ENCODE measurements at regions of chr3 and their contacts with region 1.

Region 1: DNA sequence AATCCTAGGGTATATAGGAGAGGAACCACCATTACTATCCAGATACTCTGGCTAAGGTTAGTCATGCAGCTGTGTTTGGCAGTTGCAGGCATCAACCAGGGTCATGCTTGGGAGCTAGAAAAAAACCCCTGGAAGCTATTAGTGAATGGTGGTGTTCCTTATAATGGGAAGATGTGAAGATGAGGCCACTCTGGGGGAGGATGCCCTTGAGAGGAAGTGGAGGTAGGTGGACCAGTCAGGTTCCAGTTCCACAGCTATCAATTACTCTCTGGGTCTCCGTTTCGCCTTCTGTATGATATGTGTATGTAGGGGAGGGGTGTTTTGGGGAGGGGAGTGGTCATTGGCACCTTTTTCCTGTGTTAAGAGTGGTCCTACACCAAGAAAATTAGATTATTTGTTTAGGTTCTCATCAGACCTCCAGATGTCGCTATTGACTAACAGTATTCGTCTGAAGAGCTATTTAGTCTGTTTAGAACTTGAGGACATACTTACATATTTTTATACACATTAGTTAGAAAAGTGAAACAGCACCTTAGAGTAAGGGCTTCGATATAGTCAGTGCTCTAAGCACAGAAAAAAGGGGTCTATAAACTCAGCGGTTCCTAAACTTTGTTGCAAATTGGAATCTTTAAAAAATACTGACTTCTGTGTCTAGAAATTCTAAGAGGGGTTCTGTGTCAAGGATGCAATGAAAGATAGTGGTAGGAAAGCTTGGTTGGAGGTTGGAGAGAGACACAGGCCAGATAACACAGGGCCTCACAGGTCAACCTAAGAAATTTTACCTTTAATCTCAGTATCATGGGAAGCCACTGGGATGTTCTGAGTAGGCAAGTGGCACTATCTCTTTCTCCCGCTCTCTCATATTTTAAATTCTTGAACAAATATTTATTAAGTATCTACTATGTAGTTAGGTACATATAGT is 9.1 kb upstream of the HPS3 start:
- DNase-seq: peak; percentile 63
- ATAC-seq: peak; percentile 95
- H3K4me3 ChIP-seq: no peak overlapping the region
- H3K27ac ChIP-seq: no peak overlapping the region
- H3K4me1 ChIP-seq: 0 out of 4 replicates have a peak, but pooled peaks cover 0 to 3% of the 10 kb centered on the region in 2 experiments
- H3K27me3 ChIP-seq: no peaks in the 10 kb centered on the region
- CTCF ChIP-seq: peak; percentile 49 to 94 (median 71)
- POLR2A ChIP-seq: no peak
- RAD21 ChIP-seq: peak; percentile 92

Region 2: DNA sequence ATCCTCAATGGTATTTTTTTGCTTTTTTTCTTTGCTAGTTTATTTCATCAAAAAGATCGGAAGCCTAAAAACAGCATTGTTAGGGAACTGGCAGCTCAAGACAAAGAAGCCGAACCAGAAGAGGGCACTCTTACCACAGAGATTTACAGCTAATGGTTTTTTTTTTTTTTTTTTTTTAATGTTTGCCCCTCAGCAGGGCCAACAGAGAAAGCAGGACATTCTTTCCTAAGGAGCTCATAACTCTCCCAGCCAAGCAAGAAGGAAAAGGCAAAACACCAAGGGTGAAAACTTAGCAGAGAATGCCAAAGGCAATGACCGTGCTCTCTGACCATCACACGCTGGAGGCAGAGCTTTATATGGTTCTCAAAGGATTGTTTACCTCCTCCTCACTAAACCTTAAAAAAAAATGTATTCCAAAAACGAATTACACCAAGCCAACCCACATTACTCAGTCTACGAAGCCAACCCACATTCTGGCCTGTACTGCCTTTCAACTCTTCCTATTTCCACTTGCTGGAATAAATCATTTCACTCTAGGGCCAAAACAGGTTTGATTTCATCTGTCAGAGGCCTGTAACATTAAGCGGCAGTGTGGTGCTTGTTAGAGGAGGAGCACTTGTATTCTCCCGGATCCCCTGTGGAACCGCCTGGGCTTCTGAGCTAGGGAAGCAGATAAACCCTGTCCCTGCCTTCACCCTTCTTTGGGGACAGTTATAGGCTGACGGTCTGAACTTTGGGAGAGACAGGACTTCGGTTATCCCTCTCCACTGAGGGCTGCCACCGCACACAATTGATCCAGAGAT is 164.6 kb before region 1 on chr3:
- CTCF ChIA-PET with region 1: interaction called, 26 read pairs
- POLR2A ChIA-PET with region 1: no interaction called
- RAD21 ChIA-PET with region 1: interaction called, 4 to 7 read pairs
- intact Hi-C with region 1: loop called (anchors 2 kb)
- DNase-seq: peak; percentile 48
- ATAC-seq: peak; percentile 69
- H3K4me3 ChIP-seq: no peak overlapping the region; a peak in 1 of 4 replicates
- H3K27ac ChIP-seq: no peak overlapping the region
- H3K4me1 ChIP-seq: peaks cover 0 to 5% of the 10 kb centered on the region in 2 experiments; a peak in 1 of 4 replicates
- H3K27me3 ChIP-seq: no peaks in the 10 kb centered on the region
- CTCF ChIP-seq: peak; percentile 44 to 89 (median 75)
- POLR2A ChIP-seq: no peak
- RAD21 ChIP-seq: peak; percentile 87

Region 3: GRCh38 chr3:148962513-148962912 is 157.8 kb before region 1 on chr3:
- CTCF ChIA-PET with region 1: no interaction called
- POLR2A ChIA-PET with region 1: no interaction called
- RAD21 ChIA-PET with region 1: no interaction called
- intact Hi-C with region 1: loop called (anchors 2 kb)
- DNase-seq: peak; percentile 56
- ATAC-seq: peak; percentile 82
- H3K4me3 ChIP-seq: no peak overlapping the region
- H3K27ac ChIP-seq: no peak overlapping the region
- H3K4me1 ChIP-seq: peaks cover 0 to 7% of the 10 kb centered on the region in 2 experiments; a peak in 2 of 4 replicates
- H3K27me3 ChIP-seq: no peaks in the 10 kb centered on the region
- CTCF ChIP-seq: peak; percentile 20 to 57 (median 39); a peak in 4 of 6 replicates
- POLR2A ChIP-seq: no peak
- RAD21 ChIP-seq: peak; percentile 72

Region 4: DNA sequence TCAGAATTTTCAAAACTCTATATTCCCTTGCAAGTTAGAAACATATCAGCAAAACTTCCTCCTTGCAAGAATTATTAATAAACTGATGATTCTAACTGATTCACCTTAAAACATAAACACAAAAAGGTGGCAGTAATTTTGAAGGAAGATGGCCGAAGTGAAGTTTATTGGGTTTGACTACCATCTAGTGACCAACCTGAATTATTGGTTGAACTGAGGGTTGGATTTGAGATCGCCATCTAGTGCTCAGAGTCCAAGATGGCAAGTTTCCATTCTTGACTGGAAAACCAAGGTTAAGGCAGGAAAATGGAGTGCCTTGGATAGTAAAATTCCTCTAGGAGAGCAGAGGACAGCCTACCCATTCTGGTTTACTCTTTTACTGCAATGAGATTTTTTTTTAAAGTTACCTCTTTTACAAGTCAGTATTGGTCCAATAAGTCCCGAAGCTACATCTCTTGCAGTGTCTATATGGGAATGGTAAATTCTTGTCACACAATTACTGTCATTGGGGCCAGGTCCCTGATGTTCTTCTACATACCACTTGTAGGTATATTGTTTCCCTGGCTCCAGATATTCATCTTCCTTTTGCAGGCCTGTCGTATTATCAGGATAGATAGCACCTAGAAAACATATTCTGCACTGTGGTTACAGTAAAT is 152.9 kb after region 1 on chr3:
- CTCF ChIA-PET with region 1: interaction called, 16 read pairs
- POLR2A ChIA-PET with region 1: no interaction called
- RAD21 ChIA-PET with region 1: interaction called, 3 to 6 read pairs
- intact Hi-C with region 1: loop called (anchors 1 kb)
- DNase-seq: peak; percentile 86
- ATAC-seq: peak; percentile 95
- H3K4me3 ChIP-seq: no peak overlapping the region
- H3K27ac ChIP-seq: no peak overlapping the region
- H3K4me1 ChIP-seq: no peaks in the 10 kb centered on the region
- H3K27me3 ChIP-seq: no peaks in the 10 kb centered on the region
- CTCF ChIP-seq: peak; percentile 90 to 100 (median 98)
- POLR2A ChIP-seq: no peak
- RAD21 ChIP-seq: peak; percentile 99

Region 5: DNA sequence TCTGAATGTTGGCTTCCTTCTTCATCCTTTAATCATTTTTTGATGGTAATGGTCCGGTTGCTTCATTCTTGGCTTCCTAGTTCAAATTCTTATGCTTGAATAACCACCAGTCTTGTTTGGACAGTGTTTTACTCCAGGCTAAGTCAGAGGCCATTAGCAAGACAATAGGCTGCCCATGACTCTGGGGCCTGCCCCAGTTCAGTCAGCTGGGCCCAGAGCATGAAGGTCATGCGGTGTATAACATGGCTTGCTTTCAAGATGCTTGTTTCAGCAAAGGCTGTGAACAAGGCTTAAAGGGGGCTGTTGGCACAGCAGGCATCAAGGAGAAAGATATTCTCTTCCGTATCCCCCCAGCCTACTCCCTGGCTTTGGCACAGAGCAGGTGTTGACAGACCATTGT is 199.4 kb after region 1 on chr3:
- CTCF ChIA-PET with region 1: no interaction called
- POLR2A ChIA-PET with region 1: no interaction called
- RAD21 ChIA-PET with region 1: no interaction called
- intact Hi-C with region 1: no loop called
- DNase-seq: no peak
- ATAC-seq: no peak
- H3K4me3 ChIP-seq: no peak overlapping the region
- H3K27ac ChIP-seq: no peak overlapping the region
- H3K4me1 ChIP-seq: peaks cover 0 to 24% of the 10 kb centered on the region in 2 experiments; a peak in 2 of 4 replicates
- H3K27me3 ChIP-seq: no peaks in the 10 kb centered on the region
- CTCF ChIP-seq: no peak
- POLR2A ChIP-seq: no peak
- RAD21 ChIP-seq: no peak

Region 6: GRCh38 chr3:149330609-149331331 is 210.5 kb after region 1 on chr3:
- CTCF ChIA-PET with region 1: interaction called, 5 read pairs
- POLR2A ChIA-PET with region 1: no interaction called
- RAD21 ChIA-PET with region 1: interaction called, 4 to 5 read pairs
- intact Hi-C with region 1: loop called (anchors 1 kb)
- DNase-seq: no peak
- ATAC-seq: no peak
- H3K4me3 ChIP-seq: no peak overlapping the region
- H3K27ac ChIP-seq: no peak overlapping the region
- H3K4me1 ChIP-seq: peaks cover 0 to 39% of the 10 kb centered on the region in 2 experiments; a peak in 2 of 4 replicates
- H3K27me3 ChIP-seq: no peaks in the 10 kb centered on the region
- CTCF ChIP-seq: no peak
- POLR2A ChIP-seq: no peak
- RAD21 ChIP-seq: no peak

Region 7: DNA sequence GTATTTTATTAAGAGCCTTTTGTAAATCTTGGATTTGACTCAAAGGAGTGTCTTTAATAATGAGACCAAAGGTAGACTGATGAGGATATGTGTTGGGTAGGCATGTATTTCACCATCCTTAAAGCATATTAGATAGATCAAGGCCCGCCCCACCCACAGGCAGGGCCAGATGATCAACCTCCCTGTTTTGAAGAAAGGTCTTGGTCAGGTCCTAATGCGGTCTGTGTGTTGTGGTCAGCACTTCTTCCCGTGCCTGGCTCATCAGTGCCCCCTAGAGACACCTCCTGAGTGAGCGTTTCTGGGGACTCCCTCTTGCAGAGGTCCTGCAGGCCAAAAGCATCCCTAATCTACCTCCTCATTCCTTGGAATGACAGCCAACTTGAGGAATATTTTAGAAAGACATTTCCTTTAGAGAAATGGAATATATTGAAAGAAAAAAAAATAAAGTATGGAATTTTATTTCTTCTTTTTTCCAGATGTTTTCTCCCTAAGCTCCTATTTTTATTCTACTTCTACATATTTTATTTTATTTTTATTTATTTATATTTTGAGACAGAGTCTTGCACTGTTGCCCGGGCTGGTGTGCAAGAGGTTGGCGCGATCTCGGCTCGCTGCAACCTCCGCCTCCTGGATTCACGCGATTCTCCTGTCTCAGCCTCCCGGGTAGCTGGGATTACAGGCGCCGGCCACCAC is 360.2 kb after region 1 on chr3:
- CTCF ChIA-PET with region 1: no interaction called
- POLR2A ChIA-PET with region 1: no interaction called
- RAD21 ChIA-PET with region 1: interaction called in 1 of 2 experiments, 3 read pairs
- intact Hi-C with region 1: loop called (anchors 1 kb)
- DNase-seq: peak; percentile 76
- ATAC-seq: peak; percentile 100
- H3K4me3 ChIP-seq: no peak overlapping the region
- H3K27ac ChIP-seq: no peak overlapping the region
- H3K4me1 ChIP-seq: peaks cover 0 to 6% of the 10 kb centered on the region in 2 experiments; a peak in 3 of 4 replicates
- H3K27me3 ChIP-seq: no peaks in the 10 kb centered on the region
- CTCF ChIP-seq: peak; percentile 92 to 97 (median 93); a peak in 5 of 6 replicates
- POLR2A ChIP-seq: no peak
- RAD21 ChIP-seq: peak; percentile 98

Region 8: DNA sequence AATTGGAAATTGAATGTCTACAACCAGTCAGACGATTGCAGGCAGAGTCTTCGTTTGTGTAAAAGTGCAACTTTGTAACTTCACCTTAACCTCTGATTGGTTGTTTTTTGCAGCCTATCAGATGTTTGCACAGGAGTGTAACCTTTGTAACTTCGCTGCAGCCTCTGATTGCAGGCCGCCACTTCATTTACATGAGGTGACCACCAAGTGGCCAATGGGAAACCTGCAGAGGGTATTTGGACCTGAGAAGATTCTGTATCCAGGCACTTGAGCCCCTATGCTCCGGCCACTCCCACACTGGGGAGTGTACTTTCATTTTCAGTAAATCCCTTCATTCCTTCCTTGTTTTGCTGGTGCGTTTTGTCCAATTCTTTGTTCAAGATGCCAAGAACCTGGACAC is 918.5 kb after region 1 on chr3:
- CTCF ChIA-PET with region 1: no interaction called
- POLR2A ChIA-PET with region 1: no interaction called
- RAD21 ChIA-PET with region 1: no interaction called
- intact Hi-C with region 1: no loop called
- DNase-seq: no peak
- ATAC-seq: peak; percentile 34; the same call in 1 of the 2 replicates
- H3K4me3 ChIP-seq: no peak overlapping the region
- H3K27ac ChIP-seq: no peak overlapping the region
- H3K4me1 ChIP-seq: no peaks in the 10 kb centered on the region
- H3K27me3 ChIP-seq: no peaks in the 10 kb centered on the region
- CTCF ChIP-seq: no peak
- POLR2A ChIP-seq: no peak
- RAD21 ChIP-seq: no peak